Left ventricle myocardium superior (tissue), 1 donor: ENCODE measurements at regions of chr16 and their contacts with region 1.

Region 1: DNA sequence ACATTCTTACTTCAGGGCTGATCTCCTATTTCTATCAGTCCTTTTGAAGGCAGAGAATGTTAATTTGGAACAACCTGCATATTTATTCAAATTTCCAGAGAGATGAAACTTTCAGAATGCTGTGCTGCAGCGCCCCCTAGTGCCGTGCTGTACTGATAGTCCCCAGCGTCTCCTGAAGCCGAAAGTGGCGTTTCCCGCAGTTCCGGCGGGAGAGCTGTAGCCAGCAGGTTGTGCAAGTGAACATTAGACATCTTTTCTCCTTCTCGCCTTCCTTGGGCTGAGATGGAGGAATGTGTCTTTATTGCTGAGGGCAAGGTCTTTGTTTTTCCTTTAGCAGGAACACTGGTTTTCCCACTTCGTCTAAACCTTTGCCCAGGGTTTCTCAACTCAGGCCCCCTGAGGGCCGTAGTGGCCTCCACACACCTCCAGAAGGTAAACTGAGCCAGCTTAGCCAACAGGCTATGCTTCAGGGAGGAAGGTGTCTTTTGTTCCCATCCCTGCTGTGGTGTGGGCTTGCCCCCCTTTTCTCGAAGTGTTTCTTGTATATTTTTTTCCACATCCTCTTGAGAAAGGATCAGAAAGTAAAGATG is 26.4 kb downstream of the USP10 start:
- DNase-seq: peak; percentile 96
- ATAC-seq: peak; percentile 82

Region 2: GRCh38 chr16:84511180-84511824 is 214.9 kb before region 1 on chr16:
- intact Hi-C with region 1: loop called (anchors 10 kb)
- DNase-seq: peak; percentile 89
- ATAC-seq: peak; percentile 80

Region 3: DNA sequence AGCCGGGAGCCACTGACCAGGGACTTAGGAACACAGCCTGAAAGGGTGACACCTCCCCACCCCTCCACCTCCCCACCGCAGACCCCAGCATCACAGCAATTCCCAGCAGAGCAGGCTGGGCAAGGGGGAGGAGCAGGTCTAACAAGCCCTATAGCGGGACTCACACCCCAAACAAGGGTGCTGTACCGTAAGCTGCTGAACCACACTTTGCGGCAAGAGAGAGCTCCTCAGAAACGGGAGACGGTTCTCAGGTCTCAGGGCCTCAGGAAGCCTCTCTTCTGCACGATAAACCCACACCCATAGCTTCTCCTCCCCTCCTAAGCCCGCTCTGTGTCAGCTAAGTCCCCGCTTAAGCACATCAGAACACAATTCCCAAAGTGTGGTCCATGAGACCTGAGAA is 96.6 kb before region 1 on chr16:
- intact Hi-C with region 1: loop called (anchors 10 kb)
- DNase-seq: no peak
- ATAC-seq: no peak

Region 4: GRCh38 chr16:84672276-84673202 is 53.6 kb before region 1 on chr16:
- intact Hi-C with region 1: loop called (anchors 5 kb)
- DNase-seq: peak; percentile 87
- ATAC-seq: peak; percentile 83

Region 5: DNA sequence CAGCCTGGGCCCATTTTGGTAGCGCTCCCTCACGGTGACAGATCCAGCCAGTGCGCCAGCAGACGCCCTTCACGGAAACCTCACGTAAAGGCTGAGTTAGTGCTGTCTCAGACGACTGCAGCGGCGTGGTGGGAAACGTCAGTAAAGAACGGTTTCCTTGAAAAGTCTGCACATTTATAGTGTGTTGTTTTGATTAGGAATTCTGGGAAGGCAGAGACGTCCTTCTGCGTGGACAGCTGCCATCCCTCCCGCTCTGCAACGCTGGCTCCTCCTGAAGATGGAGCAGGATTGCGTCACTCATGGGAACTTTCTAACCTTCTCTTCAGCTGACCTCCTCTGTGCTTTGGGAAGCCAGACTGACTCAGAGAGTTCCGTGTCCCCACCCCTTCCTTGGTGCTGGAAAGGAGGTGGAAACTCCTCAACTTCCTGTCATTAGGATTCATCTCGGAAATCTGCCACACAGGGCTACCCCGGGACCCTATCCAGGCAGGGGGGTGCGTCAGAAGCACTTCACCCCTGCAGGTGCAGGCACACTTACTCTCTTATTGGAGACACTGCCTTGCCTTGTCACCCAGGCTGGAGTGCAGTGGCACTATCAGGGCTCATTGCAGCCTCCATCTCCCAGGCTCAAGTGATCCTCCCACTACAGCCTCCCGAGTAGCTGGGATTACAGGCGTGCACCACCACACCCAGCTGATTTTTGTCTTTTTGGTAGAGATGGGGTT is 69.3 kb after region 1 on chr16:
- intact Hi-C with region 1: no loop called
- DNase-seq: peak; percentile 83
- ATAC-seq: peak; percentile 98